Activated T-helper 1 cell treated with anti-CD3 and anti-CD28 coated beads, Interleukin-12 subunit alpha, Interleukin-12 subunit beta, Interleukin-2, Interleukin-4 antibody, amounts not matched to agents 30 ng/mL and 10 ng/mL and 1 ng/mL, durations not matched to agents 14 hours and 24 hours and 36 hours (primary cell): ENCODE measurements at regions of chrX and their contacts with region 1.

Region 1: GRCh38 chrX:9341291-9342201 is 123.3 kb upstream of the TBL1X start:
- DNase-seq: peak; percentile 30
- H3K4me3 Mint-ChIP-seq: peak overlapping the region; percentile 73
- H3K27ac Mint-ChIP-seq: peak overlapping the region; percentile 90
- H3K4me1 Mint-ChIP-seq: peaks cover 36% of the 10 kb centered on the region
- H3K27me3 Mint-ChIP-seq: peaks cover 2% of the 10 kb centered on the region

Region 2: DNA sequence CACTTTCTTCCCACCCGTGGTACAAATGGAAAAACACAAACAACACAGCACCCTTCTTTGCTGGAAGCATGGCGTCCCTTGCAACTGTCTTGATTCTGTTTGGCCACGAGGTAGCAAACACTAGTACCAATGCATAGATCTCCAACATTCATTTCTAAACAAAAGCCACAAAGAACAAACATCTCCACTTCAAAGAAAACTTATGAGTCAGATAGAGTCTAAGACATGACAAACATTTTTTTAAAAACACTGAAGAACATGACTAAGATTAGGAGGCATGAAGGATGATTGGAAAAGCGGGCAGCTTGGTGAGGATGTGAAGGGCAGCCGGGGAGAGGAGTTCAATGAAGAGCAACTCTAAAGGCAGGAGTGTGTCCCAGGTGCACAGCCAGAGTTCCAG is 110.1 kb before region 1 on chrX:
- intact Hi-C with region 1: loop called (anchors 1 kb)
- DNase-seq: no peak
- H3K4me3 Mint-ChIP-seq: no peak overlapping the region
- H3K27ac Mint-ChIP-seq: peak overlapping the region; percentile 52
- H3K4me1 Mint-ChIP-seq: peaks cover 14% of the 10 kb centered on the region
- H3K27me3 Mint-ChIP-seq: peaks cover 2% of the 10 kb centered on the region

Region 3: DNA sequence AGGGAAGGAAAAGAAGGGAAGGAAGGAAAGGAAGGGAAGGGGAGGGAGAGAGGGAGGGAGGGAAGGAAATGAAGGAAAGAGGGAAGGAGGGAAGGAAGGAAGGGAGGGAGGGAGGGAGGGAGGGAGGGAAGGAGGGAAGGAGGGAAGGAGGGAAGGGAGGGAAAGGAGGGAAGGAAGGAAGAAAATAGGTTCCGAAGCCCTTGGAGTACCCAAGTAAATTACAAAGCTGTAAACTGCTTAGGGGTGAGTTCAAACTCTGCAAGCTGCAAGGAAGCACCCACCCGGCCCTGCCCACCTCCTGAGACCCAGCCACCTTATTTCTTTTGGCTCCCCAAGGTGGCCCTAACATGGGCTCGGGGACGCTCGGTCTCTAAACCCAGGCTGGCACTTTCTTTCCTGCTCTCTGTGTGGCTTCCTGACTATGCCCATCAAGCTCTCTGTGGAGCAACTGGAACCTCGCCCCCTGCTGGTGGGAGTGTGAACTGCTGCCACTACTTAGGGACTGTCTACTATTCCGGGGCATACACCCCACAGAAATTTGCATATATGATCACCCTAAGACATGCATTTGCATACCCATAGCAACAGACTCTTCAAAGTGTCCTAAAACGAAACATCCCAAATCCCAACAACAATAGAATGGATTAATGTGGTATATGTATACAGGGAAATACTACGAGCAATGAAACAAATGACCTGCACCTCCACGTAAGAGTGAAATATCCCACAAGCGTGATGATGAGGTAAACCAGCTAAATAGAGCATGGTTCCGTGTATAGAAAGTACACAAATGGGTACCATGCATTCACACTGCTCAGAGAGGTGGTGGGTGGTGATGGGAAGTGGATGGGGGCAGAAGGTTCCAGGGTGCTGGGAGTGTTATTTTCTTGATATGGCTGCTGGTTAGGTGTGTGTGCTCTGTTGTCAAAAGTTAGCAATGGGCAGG is 28.4 kb before region 1 on chrX:
- intact Hi-C with region 1: loop called (anchors 1 kb)
- DNase-seq: peak; percentile 32
- H3K4me3 Mint-ChIP-seq: no peak overlapping the region
- H3K27ac Mint-ChIP-seq: peak overlapping the region; percentile 58
- H3K4me1 Mint-ChIP-seq: peaks cover 11% of the 10 kb centered on the region
- H3K27me3 Mint-ChIP-seq: no peaks in the 10 kb centered on the region

Region 4: DNA sequence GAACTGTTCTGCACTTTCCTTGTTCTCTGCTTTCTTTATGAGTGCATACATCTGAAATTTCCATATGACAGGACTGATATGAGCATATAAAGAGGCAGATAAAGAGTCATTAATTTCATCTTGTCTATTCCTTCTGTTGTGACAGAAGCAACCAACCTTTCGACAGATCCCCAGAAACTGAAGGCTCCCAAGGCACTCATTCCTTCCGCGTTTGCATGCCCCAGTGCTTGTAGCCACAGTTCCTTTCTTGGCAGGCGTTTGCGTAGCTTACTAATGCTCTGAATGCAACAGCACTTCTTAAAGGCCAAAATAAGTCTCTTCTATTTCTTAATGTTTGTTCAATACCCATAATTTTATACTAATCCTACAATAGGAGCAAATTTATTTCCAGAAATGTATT is 29.3 kb after region 1 on chrX:
- intact Hi-C with region 1: loop called (anchors 1 kb)
- DNase-seq: no peak
- H3K4me3 Mint-ChIP-seq: no peak overlapping the region
- H3K27ac Mint-ChIP-seq: no peak overlapping the region
- H3K4me1 Mint-ChIP-seq: peaks cover 10% of the 10 kb centered on the region
- H3K27me3 Mint-ChIP-seq: peaks cover 2% of the 10 kb centered on the region

Region 5: DNA sequence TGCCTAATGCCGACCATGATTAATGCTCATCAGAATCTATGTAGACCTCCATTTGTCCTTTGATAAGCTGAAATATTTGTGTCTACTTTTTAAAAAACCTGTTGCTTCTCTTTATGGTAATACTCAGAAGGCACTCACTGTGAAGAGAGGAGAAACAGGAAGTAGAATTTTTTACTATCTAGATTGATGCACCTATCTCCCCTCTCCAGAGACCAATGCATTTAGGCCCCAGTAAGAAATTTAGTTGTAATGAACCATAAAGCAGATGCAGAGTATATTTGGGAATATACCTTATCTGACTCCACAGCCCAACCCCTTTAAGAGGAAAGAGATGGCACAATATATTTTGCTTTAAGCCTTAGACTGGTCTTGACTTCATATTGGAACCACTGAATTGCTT is 134.4 kb after region 1 on chrX:
- intact Hi-C with region 1: no loop called
- DNase-seq: no peak
- H3K4me3 Mint-ChIP-seq: no peak overlapping the region
- H3K27ac Mint-ChIP-seq: no peak overlapping the region
- H3K4me1 Mint-ChIP-seq: peaks cover 18% of the 10 kb centered on the region
- H3K27me3 Mint-ChIP-seq: no peaks in the 10 kb centered on the region

Region 6: DNA sequence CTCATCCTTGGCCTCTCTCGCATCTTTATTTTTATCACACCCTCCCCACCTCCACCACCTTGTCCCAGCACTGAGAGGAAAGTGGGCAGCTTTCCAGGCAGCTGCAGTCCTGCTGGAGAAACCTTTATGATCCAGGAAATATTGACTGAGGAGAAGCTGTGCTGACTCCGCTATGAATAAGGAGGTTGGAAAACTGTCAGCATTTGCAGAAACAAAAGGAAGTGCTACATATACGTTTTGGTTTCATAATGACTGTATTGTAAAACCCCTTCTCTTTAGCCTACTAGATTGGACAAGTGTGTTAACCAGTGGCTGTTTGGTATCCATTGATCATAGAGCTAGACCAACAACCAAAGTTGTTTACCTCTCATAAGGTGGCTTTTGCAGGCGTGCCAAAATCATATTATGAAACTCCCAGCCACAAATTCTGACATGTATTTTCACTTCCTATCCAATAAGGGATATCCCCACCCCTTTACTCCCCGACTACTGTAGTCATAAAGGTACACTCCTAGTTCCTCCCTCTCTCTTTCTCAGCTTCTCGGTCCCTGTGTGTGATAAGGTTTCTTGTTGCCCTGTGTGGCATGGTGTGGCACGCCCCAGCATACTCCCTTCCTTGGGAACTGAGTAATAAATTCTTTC is 335.7 kb after region 1 on chrX:
- intact Hi-C with region 1: loop called (anchors 1 kb)
- DNase-seq: peak; percentile 37
- H3K4me3 Mint-ChIP-seq: peak overlapping the region; percentile 33
- H3K27ac Mint-ChIP-seq: peak overlapping the region; percentile 64
- H3K4me1 Mint-ChIP-seq: peaks cover 18% of the 10 kb centered on the region
- H3K27me3 Mint-ChIP-seq: no peaks in the 10 kb centered on the region

Region 7: GRCh38 chrX:10217198-10217597 is 875.7 kb after region 1 on chrX:
- intact Hi-C with region 1: no loop called
- DNase-seq: no peak
- H3K4me3 Mint-ChIP-seq: no peak overlapping the region
- H3K27ac Mint-ChIP-seq: no peak overlapping the region
- H3K4me1 Mint-ChIP-seq: no peaks in the 10 kb centered on the region
- H3K27me3 Mint-ChIP-seq: no peaks in the 10 kb centered on the region